CD4-positive, alpha-beta memory T cell (primary cell): ENCODE measurements at regions of chr19 and their contacts with region 1.

Region 1: DNA sequence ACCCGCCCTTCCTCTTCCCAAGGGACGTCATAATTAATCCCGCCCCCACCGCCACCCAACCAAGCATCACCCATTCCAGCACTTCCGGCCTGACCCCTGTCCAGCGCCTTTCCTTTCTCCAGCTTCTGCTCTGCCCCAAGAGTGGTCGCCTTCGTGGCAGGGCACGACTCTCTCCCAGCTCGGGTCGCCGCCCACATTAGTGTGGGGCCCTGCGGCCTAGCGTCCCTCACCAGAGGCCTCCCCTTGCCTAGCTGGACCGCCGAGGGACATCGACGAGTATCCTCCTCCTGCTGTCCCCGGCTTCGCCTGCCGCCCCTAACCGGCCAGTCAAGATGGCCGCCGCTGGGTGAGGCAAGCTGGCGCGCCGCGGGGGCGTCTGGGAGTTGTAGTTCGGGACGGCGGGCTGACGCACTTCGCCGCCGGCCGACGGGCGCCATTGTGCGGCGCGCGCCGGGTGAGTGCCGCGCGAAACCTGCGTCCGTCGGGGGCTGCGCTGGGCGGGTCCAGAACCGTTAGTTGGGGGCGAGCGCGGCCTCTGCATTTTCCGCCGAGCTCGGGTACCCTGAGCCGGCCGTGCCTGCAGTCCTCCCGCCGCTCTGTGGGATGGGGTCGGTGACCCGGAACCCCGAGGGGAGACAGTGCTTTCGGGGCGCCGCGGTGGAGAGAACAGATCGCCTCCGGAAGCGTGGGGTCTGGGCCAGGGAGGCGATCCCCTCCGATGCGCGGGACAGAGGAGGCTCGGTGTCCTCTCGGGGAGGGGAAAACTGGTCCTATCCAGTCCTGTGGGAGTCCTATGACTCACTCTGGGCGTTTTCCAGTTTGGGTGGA is at the start of gene ZNF274:
- DNase-seq: peak; percentile 92 to 94 (median 93)
- H3K4me3 ChIP-seq: peak within 1 kb of the TSS; percentile 97 to 100
- H3K4me3 Mint-ChIP-seq: peak within 1 kb of the TSS; percentile 86 to 97 (median 92)
- H3K27ac ChIP-seq: peak within 1 kb of the TSS; percentile 97
- H3K27ac Mint-ChIP-seq: peak within 1 kb of the TSS; percentile 97 to 99 (median 99)
- H3K4me1 ChIP-seq: peaks cover 20% of the 10 kb centered on the region
- H3K4me1 Mint-ChIP-seq: peaks cover 12 to 25% (median 18%) of the 10 kb centered on the region in 4 donors
- H3K27me3 ChIP-seq: no peaks in the 10 kb centered on the region
- H3K27me3 Mint-ChIP-seq: no peaks in the 10 kb centered on the region
- total RNA-seq, gene ZNF274: 76.5 to 77.1 TPM

Region 2: DNA sequence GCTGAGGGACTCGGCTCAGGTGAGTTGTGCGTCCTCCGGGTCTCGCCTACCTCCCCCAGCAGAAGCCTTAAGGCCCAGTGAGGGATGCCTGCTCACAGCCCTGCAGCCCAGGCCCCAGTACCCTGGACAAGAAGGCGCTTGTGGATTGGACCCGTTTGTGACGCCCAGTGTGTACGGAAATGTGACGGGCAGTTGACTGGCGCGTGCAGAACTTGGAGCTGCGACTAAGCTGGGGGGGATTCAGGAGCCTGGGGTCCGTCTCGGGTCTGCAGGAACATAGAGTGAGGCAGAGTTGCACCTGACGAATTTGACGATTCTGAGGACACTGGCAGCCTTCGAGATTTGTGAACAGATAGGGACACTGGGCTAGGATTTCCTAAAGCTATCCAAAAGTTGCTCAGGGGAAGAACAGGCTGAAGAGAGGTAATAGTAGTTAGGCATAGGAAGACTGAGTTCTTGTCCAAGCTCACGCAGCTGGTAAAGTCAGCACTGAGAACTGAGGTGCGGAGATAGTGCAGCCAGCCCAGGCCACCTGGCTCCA is 500.9 kb before region 1 on chr19:
- CTCF ChIA-PET with region 1: no interaction called
- POLR2A ChIA-PET with region 1: no interaction called
- intact Hi-C with region 1: loop called (anchors 1 kb)
- DNase-seq: no peak
- H3K4me3 ChIP-seq: peak overlapping the region; percentile 87 to 92
- H3K4me3 Mint-ChIP-seq: peak overlapping the region; percentile 96 to 99 (median 97)
- H3K27ac ChIP-seq: peak overlapping the region; percentile 54
- H3K27ac Mint-ChIP-seq: peak overlapping the region; percentile 91 to 99 (median 97)
- H3K4me1 ChIP-seq: peaks cover 18% of the 10 kb centered on the region
- H3K4me1 Mint-ChIP-seq: peaks cover 21 to 45% (median 38%) of the 10 kb centered on the region in 4 donors
- H3K27me3 ChIP-seq: no peaks in the 10 kb centered on the region
- H3K27me3 Mint-ChIP-seq: no peaks in the 10 kb centered on the region

Region 3: DNA sequence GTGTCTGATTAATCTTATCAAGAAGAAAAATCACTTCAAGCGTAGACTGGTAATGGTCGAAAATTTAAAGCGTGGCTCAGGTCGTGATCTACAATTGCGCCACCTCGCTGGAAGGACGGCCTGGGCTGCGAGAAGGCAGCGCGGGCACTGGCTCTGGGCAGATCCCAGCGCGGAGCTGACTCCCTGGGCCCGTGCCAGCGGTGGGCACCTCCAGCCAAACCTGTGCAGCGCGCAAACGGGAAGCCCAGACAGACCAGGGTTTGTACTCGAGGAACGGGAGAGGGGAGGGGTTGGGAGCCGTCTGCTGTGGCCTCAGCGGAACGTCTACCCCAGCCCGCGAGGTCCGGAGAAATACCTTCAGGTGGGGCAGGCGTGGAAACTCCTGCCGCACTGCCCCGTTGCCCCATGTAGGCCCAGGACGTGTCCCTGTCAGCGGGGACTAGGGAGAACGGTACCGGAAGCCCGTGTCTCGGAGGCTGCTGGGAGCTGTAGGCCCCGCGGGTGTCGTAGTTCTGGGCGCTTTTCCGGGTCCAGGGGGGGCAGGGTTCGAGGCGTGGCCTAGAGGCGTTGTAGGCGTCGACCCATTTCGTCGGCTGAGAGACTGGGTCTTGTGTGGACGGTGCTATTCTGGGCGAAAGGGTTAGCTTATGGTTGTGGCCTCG is 20.7 kb after region 1 on chr19:
- CTCF ChIA-PET with region 1: no interaction called
- POLR2A ChIA-PET with region 1: interaction called, 10 read pairs
- intact Hi-C with region 1: no loop called
- DNase-seq: no peak
- H3K4me3 ChIP-seq: no peak overlapping the region
- H3K4me3 Mint-ChIP-seq: no peak overlapping the region
- H3K27ac ChIP-seq: no peak overlapping the region
- H3K27ac Mint-ChIP-seq: no peak overlapping the region
- H3K4me1 ChIP-seq: no peaks in the 10 kb centered on the region
- H3K4me1 Mint-ChIP-seq: peaks cover 0 to 5% (median under 1%) of the 10 kb centered on the region in 4 donors
- H3K27me3 ChIP-seq: no peaks in the 10 kb centered on the region
- H3K27me3 Mint-ChIP-seq: no peaks in the 10 kb centered on the region

Region 4: GRCh38 chr19:58326914-58327726 is 143.9 kb after region 1 on chr19 and contains the start of gene ZSCAN22:
- CTCF ChIA-PET with region 1: no interaction called
- POLR2A ChIA-PET with region 1: interaction called, 4 read pairs
- intact Hi-C with region 1: loop called (anchors 5 kb)
- DNase-seq: peak; percentile 80 to 89 (median 83)
- H3K4me3 ChIP-seq: peak within 1 kb of the TSS; percentile 32 to 77
- H3K4me3 Mint-ChIP-seq: no peak within 1 kb of the TSS
- H3K27ac ChIP-seq: peak within 1 kb of the TSS; percentile 80
- H3K27ac Mint-ChIP-seq: no peak within 1 kb of the TSS
- H3K4me1 ChIP-seq: peaks cover 25% of the 10 kb centered on the region
- H3K4me1 Mint-ChIP-seq: peaks cover 0 to 2% (median under 1%) of the 10 kb centered on the region in 4 donors
- H3K27me3 ChIP-seq: no peaks in the 10 kb centered on the region
- H3K27me3 Mint-ChIP-seq: no peaks in the 10 kb centered on the region
- total RNA-seq, gene ZSCAN22: 5.0 to 5.3 TPM

Region 5: DNA sequence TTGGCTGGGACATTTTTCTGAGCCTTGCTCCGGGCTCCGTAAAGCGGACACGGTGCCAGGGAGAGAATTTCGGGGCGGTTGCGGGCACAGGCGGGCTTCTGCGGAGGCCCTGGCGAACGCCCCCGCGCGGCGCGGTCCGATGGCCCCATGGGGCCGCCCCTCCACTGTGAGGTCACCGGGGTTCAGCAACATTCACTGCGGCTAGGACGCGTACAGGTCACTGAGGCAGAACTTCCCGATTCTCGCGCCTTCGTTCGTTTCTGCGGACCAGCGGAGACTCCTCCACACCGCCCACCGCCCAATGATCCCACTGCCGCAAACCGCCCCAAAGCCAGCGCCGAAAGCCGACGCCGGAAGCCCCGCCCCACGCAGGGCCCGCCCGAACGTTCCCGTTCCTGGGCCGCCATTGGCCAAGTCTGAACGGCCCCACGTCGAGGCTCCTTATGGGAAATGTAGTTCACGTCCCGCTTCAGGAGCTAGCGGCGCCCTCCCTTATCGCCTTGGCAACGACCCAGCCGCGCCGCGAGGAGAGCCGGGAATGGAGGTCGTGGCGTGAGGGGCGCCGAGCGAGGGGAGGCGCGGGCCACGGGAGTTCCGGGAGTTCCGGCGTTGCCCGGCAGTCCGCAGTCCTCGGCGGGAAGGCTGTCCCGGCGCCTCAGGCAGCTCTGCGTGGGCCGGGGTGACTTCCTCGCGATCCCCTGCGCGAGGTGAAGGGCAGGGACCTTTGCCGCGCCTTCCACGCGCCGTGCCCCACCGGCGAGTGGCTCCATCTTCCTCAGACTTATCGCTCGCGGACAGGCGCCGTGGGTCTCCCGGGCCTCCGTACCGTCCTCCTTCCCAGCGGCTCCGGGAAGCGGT is 225.2 kb after region 1 on chr19 and contains the start of gene ZNF584:
- CTCF ChIA-PET with region 1: no interaction called
- POLR2A ChIA-PET with region 1: no interaction called
- intact Hi-C with region 1: loop called (anchors 2 kb)
- DNase-seq: peak; percentile 93 to 94 (median 93)
- H3K4me3 ChIP-seq: peak within 1 kb of the TSS; percentile 71 to 94
- H3K4me3 Mint-ChIP-seq: peak within 1 kb of the TSS; percentile 92 to 100 (median 96)
- H3K27ac ChIP-seq: peak within 1 kb of the TSS; percentile 77
- H3K27ac Mint-ChIP-seq: peak within 1 kb of the TSS; percentile 91 to 98 (median 95)
- H3K4me1 ChIP-seq: peaks cover 25% of the 10 kb centered on the region
- H3K4me1 Mint-ChIP-seq: peaks cover 21 to 39% (median 33%) of the 10 kb centered on the region in 4 donors
- H3K27me3 ChIP-seq: no peaks in the 10 kb centered on the region
- H3K27me3 Mint-ChIP-seq: no peaks in the 10 kb centered on the region
- total RNA-seq, gene ZNF584: 10.3 to 10.7 TPM

Region 6: GRCh38 chr19:58499021-58499927 is 316.1 kb after region 1 on chr19:
- CTCF ChIA-PET with region 1: no interaction called
- POLR2A ChIA-PET with region 1: interaction called, 6 read pairs
- intact Hi-C with region 1: loop called (anchors 1 kb)
- DNase-seq: peak; percentile 89 to 96 (median 90)
- H3K4me3 ChIP-seq: peak overlapping the region; percentile 34 to 52
- H3K4me3 Mint-ChIP-seq: peak overlapping the region; percentile 86 to 94 (median 91)
- H3K27ac ChIP-seq: peak overlapping the region; percentile 66
- H3K27ac Mint-ChIP-seq: peak overlapping the region; percentile 77 to 98 (median 96)
- H3K4me1 ChIP-seq: peaks cover 16% of the 10 kb centered on the region
- H3K4me1 Mint-ChIP-seq: peaks cover 14 to 25% (median 17%) of the 10 kb centered on the region in 4 donors
- H3K27me3 ChIP-seq: no peaks in the 10 kb centered on the region
- H3K27me3 Mint-ChIP-seq: no peaks in the 10 kb centered on the region